ENCODE measurements at regions of chr20 and their contacts with region 1.

Region 1: GRCh38 chr20:40551125-40551530 is 137.9 kb downstream of the MAFB start:
- DNase-seq: peak; percentile 40
- H3K4me3 ChIP-seq: no peak overlapping the region
- H3K27ac ChIP-seq: no peak overlapping the region
- H3K4me1 ChIP-seq: no peaks in the 10 kb centered on the region
- H3K27me3 ChIP-seq: peaks cover 7% of the 10 kb centered on the region
- CTCF ChIP-seq: no peak

Region 2: DNA sequence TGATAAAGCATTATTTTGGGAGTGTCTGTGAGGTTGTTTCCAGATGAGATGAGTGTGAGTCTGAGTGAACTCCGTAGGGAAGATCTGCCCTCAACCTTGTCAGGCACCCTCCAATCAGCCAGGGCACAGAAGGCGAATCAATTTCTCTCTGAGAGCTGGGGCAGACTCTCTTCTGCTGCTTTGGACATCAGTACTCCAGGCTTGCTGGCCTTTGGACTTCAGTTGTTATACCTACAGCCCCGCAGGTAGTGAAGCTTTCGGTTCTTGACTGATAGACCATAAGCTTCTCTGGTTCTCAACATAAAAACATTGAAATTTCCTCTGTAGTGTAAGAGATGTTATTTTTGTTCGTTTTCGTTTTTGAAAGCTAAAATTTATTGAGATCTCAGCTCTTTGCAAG is 66.5 kb after region 1 on chr20:
- intact Hi-C with region 1: loop called (anchors 10 kb)
- DNase-seq: no peak
- H3K4me3 ChIP-seq: no peak overlapping the region
- H3K27ac ChIP-seq: no peak overlapping the region
- H3K4me1 ChIP-seq: no peaks in the 10 kb centered on the region
- H3K27me3 ChIP-seq: peaks cover 29% of the 10 kb centered on the region
- CTCF ChIP-seq: no peak